HepG2 (cell line): ENCODE measurements at regions of chr1 and their contacts with region 1.

Region 1: GRCh38 chr1:115717541-115717940 is 51.0 kb downstream of the CASQ2 start:
- DNase-seq: peak; percentile 57
- ATAC-seq: peak; percentile 64
- H3K4me3 ChIP-seq: no peak overlapping the region
- H3K27ac ChIP-seq: no peak overlapping the region
- H3K4me1 ChIP-seq: peaks cover 23% of the 10 kb centered on the region
- H3K27me3 ChIP-seq: no peaks in the 10 kb centered on the region
- CTCF ChIP-seq: peak; percentile 74
- EP300 ChIP-seq: no peak
- POLR2A ChIP-seq: no peak
- RAD21 ChIP-seq: peak; percentile 36; the same call in 1 of the 2 replicates

Region 2: DNA sequence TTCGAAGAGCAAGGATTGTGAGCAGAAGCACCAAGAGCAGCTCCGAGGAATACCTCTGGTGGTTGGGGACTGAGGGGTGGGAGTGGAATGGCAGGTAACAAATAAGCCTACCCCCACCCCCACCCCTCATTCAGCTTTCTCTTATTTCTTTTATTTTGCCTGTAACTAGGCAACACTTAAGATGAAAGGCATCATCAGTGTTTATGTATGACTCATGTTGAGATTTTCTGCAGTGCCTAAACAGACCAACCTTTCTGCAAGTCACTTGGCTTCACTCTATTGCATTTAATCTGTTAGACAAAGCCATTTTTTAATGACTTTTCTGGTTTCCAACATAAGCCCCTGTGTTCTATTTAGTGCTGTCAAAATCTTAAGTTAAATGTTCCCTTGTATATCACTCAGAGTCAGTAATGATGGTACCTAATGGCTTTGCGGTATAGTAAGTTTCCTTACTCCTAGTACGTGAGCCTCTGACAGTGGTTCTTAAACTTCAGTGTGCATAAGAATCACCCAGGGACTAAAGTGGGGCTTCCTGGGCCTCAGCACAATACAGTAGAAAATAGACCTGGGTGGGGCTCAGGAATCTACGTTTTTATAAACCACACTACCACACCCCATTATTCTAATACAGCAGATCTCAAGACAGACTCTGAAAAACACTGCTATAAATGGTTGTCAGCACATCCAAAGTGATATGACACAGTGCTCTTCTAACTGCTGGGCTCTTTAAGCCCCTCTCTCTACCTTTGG is 31.0 kb after region 1 on chr1:
- CTCF ChIA-PET with region 1: no interaction called
- POLR2A ChIA-PET with region 1: no interaction called
- in situ Hi-C with region 1: no loop called
- intact Hi-C with region 1: no loop called
- DNase-seq: no peak
- ATAC-seq: no peak
- H3K4me3 ChIP-seq: no peak overlapping the region
- H3K27ac ChIP-seq: no peak overlapping the region
- H3K4me1 ChIP-seq: no peaks in the 10 kb centered on the region
- H3K27me3 ChIP-seq: no peaks in the 10 kb centered on the region
- CTCF ChIP-seq: no peak
- EP300 ChIP-seq: no peak
- POLR2A ChIP-seq: no peak
- RAD21 ChIP-seq: no peak

Region 3: DNA sequence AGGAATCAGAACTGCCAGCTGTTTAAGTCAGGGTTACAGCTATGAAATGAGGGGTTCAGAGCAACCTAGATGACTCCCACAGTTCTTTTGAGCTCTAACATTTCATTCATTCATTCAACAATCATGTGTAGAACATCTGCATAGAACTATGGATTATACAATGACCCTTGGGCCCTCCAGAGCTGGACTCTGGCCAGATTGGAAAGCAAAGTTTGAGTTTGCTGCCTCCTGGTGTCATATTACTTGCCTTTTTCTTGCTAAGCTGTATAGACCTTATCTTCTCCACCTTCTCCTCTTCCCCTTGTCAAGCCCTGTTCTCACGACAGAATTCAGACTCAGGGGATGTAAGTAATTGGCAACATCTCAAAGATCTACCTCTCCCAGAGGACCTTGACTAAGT is 47.0 kb after region 1 on chr1:
- CTCF ChIA-PET with region 1: interaction called, 16 read pairs
- POLR2A ChIA-PET with region 1: no interaction called
- in situ Hi-C with region 1: no loop called
- intact Hi-C with region 1: loop called (anchors 1 kb)
- DNase-seq: peak; percentile 57
- ATAC-seq: peak; percentile 82
- H3K4me3 ChIP-seq: no peak overlapping the region
- H3K27ac ChIP-seq: no peak overlapping the region
- H3K4me1 ChIP-seq: no peaks in the 10 kb centered on the region
- H3K27me3 ChIP-seq: peaks cover 0 to 5% of the 10 kb centered on the region in 2 experiments; a peak in 1 of 5 replicates
- CTCF ChIP-seq: peak; percentile 78
- EP300 ChIP-seq: no peak
- POLR2A ChIP-seq: no peak
- RAD21 ChIP-seq: peak; percentile 55; the same call in 1 of the 2 replicates

Region 4: DNA sequence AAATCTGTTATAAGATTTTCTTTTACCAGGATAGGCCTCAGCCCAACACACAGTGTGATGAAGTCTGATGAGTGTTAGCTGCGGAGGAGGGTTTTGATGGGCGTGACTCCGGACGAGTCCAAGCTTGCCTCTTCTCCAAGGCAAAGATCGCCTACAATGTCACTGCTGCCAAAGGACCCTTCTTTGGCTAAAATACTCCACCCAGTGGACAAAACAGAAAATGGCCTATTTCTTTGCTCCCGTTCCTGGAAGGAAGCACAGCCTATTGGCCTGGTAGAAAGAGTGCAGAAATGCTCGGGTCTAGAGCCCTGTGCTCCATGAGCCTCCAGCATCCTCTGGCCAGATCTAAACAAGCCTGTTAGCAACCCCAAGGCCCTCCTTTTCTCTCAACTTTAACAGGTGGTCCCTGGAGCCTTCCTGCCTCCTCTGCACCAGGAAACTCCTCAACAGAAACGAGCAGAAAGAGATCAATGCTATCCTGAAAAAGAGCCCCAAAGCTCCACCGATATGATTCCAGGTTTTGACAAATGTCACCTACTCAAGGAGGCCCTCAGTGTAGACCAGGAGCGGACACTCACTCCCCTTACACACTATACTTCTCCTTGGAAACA is 54.4 kb after region 1 on chr1:
- CTCF ChIA-PET with region 1: interaction called, 16 read pairs
- POLR2A ChIA-PET with region 1: no interaction called
- in situ Hi-C with region 1: loop called (anchors 5 kb)
- intact Hi-C with region 1: loop called (anchors 1 kb)
- DNase-seq: peak; percentile 78
- ATAC-seq: peak; percentile 99
- H3K4me3 ChIP-seq: peak overlapping the region; percentile 26 to 50 (median 43); a peak in 5 of 6 replicates
- H3K27ac ChIP-seq: no peak overlapping the region
- H3K4me1 ChIP-seq: 0 out of 2 replicates have a peak, but pooled peaks cover 5% of the 10 kb centered on the region
- H3K27me3 ChIP-seq: peaks cover 0 to 5% of the 10 kb centered on the region in 2 experiments; a peak in 1 of 5 replicates
- CTCF ChIP-seq: peak; percentile 91
- EP300 ChIP-seq: no peak
- POLR2A ChIP-seq: no peak
- RAD21 ChIP-seq: peak; percentile 74